ENCODE measurements at regions of chr11 and their contacts with region 1.

Region 1: DNA sequence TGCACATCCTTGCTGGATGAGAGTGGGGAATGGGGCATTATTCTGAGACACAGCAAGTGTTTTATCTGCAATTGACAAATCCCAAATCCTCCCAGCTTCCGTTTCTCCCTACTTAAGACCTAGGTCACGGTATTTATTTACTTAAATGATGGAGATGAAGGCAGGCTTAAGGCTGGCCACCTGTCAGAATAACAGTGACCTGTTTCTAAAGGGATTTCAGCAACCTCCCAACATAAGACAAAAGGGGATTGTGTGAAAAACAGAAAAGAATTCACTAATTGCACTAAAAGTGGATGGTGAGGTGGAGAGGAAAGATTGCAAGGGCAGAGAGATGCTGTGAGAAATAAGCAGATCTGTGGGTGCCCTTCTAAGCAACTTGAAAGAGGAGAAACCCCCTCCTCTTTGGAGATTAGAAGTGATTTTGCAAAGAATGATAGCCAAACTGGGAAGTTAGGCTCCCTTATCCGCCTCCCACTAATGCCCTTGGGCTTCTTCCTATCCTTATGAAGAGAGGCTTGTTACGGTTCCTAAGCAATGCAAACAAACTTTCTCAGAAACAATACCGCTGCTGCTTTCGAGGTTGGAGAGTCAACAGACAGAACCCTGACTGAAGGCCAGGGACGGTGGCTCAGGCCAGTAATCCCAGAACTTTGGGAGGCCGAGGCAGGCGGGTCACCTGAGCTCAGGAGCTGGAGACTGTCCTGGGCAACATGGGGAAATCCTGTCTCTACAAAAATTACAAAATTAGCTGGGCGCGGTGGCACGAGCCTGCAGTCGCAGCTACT is 84.3 kb downstream of the ARL14EP start:
- DNase-seq: no peak
- ATAC-seq: no peak
- H3K4me3 Mint-ChIP-seq: no peak overlapping the region
- H3K27ac Mint-ChIP-seq: no peak overlapping the region
- H3K4me1 Mint-ChIP-seq: no peaks in the 10 kb centered on the region
- H3K27me3 Mint-ChIP-seq: peaks cover 10% of the 10 kb centered on the region

Region 2: DNA sequence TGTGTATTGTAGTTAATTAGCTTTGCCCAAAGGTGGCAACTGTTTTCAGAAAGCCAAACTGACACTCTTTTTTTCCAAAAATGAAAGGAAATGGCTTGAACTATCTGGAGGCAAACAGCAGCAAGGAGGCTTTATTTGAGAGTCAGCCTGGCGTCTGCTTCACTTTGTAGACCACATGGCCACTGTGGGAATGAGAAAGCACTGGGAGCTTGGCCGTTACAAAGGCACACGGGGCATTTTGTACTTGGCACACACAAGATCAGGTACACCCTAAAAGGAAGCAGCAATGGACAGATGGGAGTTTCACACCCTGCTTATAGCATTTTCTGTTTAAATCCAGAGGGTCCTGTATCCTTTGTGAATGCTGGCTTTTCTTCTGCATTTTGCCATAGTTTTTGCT is 52.7 kb after region 1 on chr11:
- CTCF ChIA-PET with region 1: no interaction called
- POLR2A ChIA-PET with region 1: no interaction called
- intact Hi-C with region 1: loop called in 1 of 2 experiments (anchors 10 kb)
- DNase-seq: no peak
- ATAC-seq: no peak
- H3K4me3 Mint-ChIP-seq: no peak overlapping the region
- H3K27ac Mint-ChIP-seq: no peak overlapping the region
- H3K4me1 Mint-ChIP-seq: no peaks in the 10 kb centered on the region
- H3K27me3 Mint-ChIP-seq: no peaks in the 10 kb centered on the region

Region 3: DNA sequence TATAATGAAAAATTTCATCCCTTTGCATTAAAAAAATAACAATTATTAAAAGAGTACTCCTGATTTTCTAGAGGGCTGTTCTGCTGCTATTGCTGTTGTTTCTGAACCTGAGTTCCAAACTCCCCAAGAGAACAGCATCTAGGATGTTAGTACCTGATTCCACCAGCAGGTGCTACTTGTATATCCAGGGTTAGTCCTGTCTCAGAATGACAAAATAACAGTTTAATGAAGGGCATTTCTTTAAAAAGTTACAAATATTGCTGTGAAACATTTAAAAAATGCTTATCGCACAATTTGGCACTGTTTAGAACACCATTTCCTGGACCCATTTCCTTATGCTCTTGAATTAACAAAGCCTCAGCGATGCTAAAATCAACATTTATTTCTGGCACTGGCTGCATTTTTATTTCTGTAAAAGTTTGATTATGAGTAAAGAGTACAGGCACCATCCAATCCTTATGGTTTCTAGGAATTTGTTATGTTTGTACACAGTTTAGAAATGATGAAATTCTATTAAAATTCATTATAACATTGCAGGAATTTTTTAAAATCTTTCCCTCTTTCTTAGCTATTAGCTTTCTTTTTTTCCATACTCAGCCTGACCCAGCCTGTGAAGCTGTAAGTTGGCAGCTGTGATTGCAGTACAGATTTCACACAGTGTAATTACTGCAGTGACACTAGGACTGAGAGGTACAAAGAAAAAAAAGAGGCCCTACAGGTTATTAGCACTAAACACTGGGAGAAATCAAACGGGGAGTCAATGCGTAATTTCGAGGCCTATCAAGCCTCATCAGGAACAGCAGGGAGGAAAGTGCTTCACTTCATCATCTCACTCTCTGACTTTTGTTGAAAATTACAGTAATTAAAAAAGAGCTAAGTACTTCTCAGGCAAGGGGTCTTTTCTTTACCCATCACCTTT is 753.6 kb after region 1 on chr11:
- CTCF ChIA-PET with region 1: no interaction called
- POLR2A ChIA-PET with region 1: no interaction called
- intact Hi-C with region 1: no loop called
- DNase-seq: no peak
- ATAC-seq: no peak
- H3K4me3 Mint-ChIP-seq: no peak overlapping the region
- H3K27ac Mint-ChIP-seq: no peak overlapping the region
- H3K4me1 Mint-ChIP-seq: no peaks in the 10 kb centered on the region
- H3K27me3 Mint-ChIP-seq: no peaks in the 10 kb centered on the region